B cell (primary cell): ENCODE measurements at regions of chr19 and their contacts with region 1.

Region 1: DNA sequence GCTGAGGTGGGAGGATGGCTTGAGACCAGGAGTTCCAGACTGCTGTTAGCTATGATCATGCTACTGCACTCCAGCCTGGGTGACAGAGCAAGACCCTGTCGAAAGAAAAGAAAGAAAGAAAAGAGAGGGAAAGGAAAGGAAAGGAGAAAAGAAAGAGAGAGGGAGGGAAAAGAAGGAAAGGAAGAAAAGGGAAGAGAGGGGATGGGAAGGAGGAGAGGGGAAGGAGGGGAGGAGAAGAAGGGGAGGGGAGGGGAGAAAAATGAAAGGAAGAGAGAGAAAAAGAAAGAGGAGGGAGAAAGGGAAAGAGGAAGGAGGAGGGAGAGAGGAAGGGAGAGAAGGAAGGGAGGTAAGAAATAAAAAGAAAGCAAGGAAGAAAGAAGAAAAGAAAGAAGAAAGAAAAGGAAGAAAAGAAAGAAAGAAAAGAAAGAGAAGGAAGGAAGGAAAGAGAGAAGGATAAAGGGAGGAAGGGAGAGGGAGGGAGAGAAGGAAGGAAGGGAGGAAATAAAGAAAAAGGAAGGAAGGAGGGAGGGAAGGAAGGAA is 44.1 kb downstream of the INSR start:
- DNase-seq: no peak
- ATAC-seq: no peak
- H3K4me3 ChIP-seq: no peak overlapping the region
- H3K4me3 Mint-ChIP-seq: no peak overlapping the region
- H3K27ac ChIP-seq: no peak overlapping the region
- H3K27ac Mint-ChIP-seq: no peak overlapping the region
- H3K4me1 ChIP-seq: peaks cover 0 to 2% of the 10 kb centered on the region in 2 donors
- H3K4me1 Mint-ChIP-seq: peaks cover 2% of the 10 kb centered on the region
- H3K27me3 ChIP-seq: no peaks in the 10 kb centered on the region
- H3K27me3 Mint-ChIP-seq: peaks cover 4% of the 10 kb centered on the region
- CTCF ChIP-seq: peak; percentile 9

Region 2: DNA sequence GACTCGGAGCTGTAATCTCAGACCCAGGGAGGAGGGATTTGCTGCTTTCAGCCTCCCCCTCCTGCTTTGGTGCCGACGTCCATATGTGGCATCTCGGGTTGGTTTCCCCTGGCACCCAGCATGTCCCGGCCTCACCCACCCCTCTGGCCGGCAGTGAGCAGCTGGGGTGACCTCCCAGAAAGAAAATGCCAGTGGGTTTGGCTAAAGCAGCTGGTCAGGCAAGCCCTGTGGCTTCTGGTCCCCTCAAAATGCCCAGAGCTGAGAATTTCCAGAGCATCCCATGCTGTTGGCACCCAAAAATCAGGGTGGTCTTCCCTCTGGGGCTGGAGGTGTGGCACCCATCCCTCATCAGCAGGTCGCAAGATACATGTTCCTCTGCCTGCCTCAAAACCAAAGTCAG is 10.1 kb after region 1 on chr19:
- CTCF ChIA-PET with region 1: no interaction called
- POLR2A ChIA-PET with region 1: interaction called, 10 read pairs
- intact Hi-C with region 1: no loop called
- DNase-seq: no peak
- ATAC-seq: no peak
- H3K4me3 ChIP-seq: no peak overlapping the region
- H3K4me3 Mint-ChIP-seq: no peak overlapping the region
- H3K27ac ChIP-seq: no peak overlapping the region
- H3K27ac Mint-ChIP-seq: no peak overlapping the region
- H3K4me1 ChIP-seq: no peaks in the 10 kb centered on the region
- H3K4me1 Mint-ChIP-seq: no peaks in the 10 kb centered on the region
- H3K27me3 ChIP-seq: no peaks in the 10 kb centered on the region
- H3K27me3 Mint-ChIP-seq: no peaks in the 10 kb centered on the region
- CTCF ChIP-seq: no peak